SK-N-SH (cell line): ENCODE measurements at regions of chr2 and their contacts with region 1.

Region 1: GRCh38 chr2:101001691-101002561 is at the start of gene RPL31:
- DNase-seq: peak; percentile 98
- H3K4me3 ChIP-seq: peak within 1 kb of the TSS; percentile 91 to 96
- H3K27ac ChIP-seq: peak within 1 kb of the TSS; percentile 81 to 90
- H3K4me1 ChIP-seq: peaks cover 11 to 26% of the 10 kb centered on the region in 2 experiments
- H3K27me3 ChIP-seq: no peaks in the 10 kb centered on the region
- CTCF ChIP-seq: no peak
- EP300 ChIP-seq: 0 out of 4 replicates have a peak, but pooled peaks of 1 of the 2 experiments have one; percentile 39
- RAD21 ChIP-seq: no peak
- polyA plus RNA-seq, gene RPL31: 4,215 and 4,488 TPM in 2 replicates

Region 2: DNA sequence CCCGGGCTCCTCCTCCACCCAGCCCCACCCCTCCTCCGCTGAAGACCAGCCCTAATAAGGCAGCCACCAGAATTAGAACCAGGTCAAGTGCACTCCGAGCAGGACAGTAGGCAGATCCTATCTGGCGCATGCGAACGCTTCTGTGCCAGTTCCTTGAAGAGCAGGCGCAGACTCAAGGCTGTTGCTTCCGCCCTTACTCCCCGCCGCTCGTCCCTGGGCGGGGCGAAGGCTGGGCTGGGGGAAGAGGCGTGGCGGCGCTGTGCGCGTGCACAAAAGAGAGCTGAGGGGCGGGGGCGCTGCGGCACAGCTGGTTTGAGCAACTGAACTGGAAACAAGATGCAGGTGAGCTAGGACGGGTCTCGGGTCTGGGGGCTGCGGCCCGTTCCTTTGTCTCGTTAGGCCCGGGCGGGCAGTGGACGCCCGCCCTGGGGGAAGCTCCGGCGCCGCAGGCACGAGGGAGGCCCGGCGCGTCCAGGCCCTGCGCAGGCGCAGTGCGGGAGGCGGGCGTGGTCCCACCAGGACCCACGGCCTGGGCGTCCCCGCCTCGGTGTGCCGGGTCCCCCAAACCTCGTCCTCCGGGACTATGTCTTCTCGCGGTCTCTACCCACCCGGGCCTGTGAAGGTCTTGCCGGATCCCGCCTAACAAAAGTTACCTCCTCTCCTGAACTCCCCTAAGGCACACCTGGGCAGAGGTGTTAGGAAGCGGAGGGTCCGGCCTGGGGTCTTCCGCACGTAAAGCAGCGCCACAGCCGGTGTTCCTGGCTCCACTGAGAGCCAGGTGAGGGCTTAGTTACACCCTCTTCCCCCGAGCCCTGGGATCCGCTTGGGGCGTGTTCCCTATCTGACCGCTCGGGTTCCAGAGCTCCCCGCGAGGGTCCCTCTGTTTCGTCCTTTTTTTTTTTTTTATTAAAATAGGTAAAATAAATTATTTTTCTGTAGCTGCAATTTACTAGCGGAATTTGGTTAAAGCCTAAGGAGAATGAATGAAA is 438.9 kb before region 1 on chr2 and contains the start of gene PDCL3:
- CTCF ChIA-PET with region 1: no interaction called
- POLR2A ChIA-PET with region 1: interaction called, 16 read pairs
- DNase-seq: peak; percentile 96
- H3K4me3 ChIP-seq: peak within 1 kb of the TSS; percentile 83 to 98
- H3K27ac ChIP-seq: peak within 1 kb of the TSS; percentile 77 to 95
- H3K4me1 ChIP-seq: peaks cover 0 to 9% of the 10 kb centered on the region in 2 experiments; a peak in 1 of 4 replicates
- H3K27me3 ChIP-seq: no peaks in the 10 kb centered on the region
- CTCF ChIP-seq: no peak; the same call in 1 of the 2 replicates
- EP300 ChIP-seq: peak in 1 of 2 experiments; percentile 26; a peak in 2 of 4 replicates
- RAD21 ChIP-seq: no peak
- polyA plus RNA-seq, gene PDCL3: 32.8 and 34.7 TPM in 2 replicates

Region 3: GRCh38 chr2:101012706-101013181 is 10.8 kb after region 1 on chr2:
- CTCF ChIA-PET with region 1: interaction called, 22 read pairs
- POLR2A ChIA-PET with region 1: interaction called, 6 read pairs
- DNase-seq: peak; percentile 45
- H3K4me3 ChIP-seq: no peak overlapping the region
- H3K27ac ChIP-seq: no peak overlapping the region
- H3K4me1 ChIP-seq: no peaks in the 10 kb centered on the region; a peak in 1 of 4 replicates
- H3K27me3 ChIP-seq: no peaks in the 10 kb centered on the region
- CTCF ChIP-seq: peak; percentile 90
- EP300 ChIP-seq: no peak
- RAD21 ChIP-seq: peak; percentile 85

Region 4: GRCh38 chr2:101151141-101151858 is 149.4 kb after region 1 on chr2 and contains the start of gene TBC1D8:
- CTCF ChIA-PET with region 1: interaction called, 57 read pairs
- POLR2A ChIA-PET with region 1: interaction called, 12 read pairs
- DNase-seq: peak; percentile 97
- H3K4me3 ChIP-seq: peak within 1 kb of the TSS; percentile 76 to 78
- H3K27ac ChIP-seq: peak within 1 kb of the TSS; percentile 31 to 91; a peak in 3 of 4 replicates
- H3K4me1 ChIP-seq: peaks cover 0 to 28% of the 10 kb centered on the region in 2 experiments; a peak in 2 of 4 replicates
- H3K27me3 ChIP-seq: no peaks in the 10 kb centered on the region
- CTCF ChIP-seq: no peak
- EP300 ChIP-seq: 0 out of 4 replicates have a peak, but pooled peaks of 1 of the 2 experiments have one; percentile 16
- RAD21 ChIP-seq: no peak
- polyA plus RNA-seq, gene TBC1D8: 5.3 and 7.0 TPM in 2 replicates